Naive thymus-derived CD4-positive, alpha-beta T cell (primary cell): ENCODE measurements at regions of chr12 and their contacts with region 1.

Region 1: DNA sequence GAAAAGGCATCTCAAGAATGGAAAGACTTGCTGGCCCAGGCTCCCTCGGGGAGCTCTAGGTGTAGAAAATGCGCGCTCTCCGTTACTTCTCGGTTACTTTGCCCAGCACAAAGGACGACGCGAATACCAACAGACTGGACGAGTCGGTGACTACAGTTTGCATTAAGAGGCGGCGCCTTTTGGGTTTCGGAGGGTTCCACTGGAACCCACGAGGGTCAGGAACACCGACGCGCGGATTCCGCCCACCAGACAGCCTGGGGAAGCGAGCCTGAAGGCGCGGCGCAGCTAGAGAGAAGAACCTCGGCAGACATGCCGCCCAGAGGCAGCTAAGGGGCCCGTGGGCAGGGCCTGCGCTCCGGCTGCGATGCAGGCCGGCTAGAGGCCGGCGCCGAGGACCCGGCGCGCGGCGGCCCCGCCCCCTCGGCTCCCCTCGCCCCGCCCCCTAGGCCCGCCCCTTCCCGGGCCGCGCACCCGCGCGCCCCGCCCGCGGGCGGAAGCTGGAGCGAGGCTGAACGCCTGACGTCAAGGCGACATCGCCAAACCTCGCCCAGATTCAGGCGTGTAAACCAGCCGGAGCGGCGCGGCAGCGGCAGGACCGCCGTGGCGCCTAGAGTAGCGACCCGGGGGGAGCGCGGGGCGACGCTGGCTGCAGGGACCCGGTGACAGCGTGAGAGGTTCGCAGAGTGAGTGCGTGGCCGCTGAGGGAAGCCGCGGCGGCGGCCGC is at the start of gene RAP1B:
- DNase-seq: peak; percentile 86 to 92 (median 89)
- ATAC-seq: peak; percentile 92
- H3K4me3 ChIP-seq: peak within 1 kb of the TSS; percentile 89
- H3K4me3 Mint-ChIP-seq: peak within 1 kb of the TSS; percentile 93 to 99 (median 98)
- H3K27ac ChIP-seq: peak within 1 kb of the TSS; percentile 97
- H3K27ac Mint-ChIP-seq: peak within 1 kb of the TSS; percentile 95 to 99 (median 98)
- H3K4me1 ChIP-seq: peaks cover 15 to 18% of the 10 kb centered on the region in 2 donors
- H3K4me1 Mint-ChIP-seq: peaks cover 36 to 46% (median 41%) of the 10 kb centered on the region in 7 donors
- H3K27me3 ChIP-seq: no peaks in the 10 kb centered on the region
- H3K27me3 Mint-ChIP-seq: no peaks in the 10 kb centered on the region
- total RNA-seq, gene RAP1B: 202 to 287 (median 223) TPM

Region 2: GRCh38 chr12:68131869-68132405 is 478.6 kb before region 1 on chr12:
- CTCF ChIA-PET with region 1: no interaction called
- POLR2A ChIA-PET with region 1: no interaction called
- intact Hi-C with region 1: no loop called
- DNase-seq: no peak
- ATAC-seq: no peak
- H3K4me3 ChIP-seq: no peak overlapping the region
- H3K4me3 Mint-ChIP-seq: no peak overlapping the region
- H3K27ac ChIP-seq: no peak overlapping the region
- H3K27ac Mint-ChIP-seq: no peak overlapping the region
- H3K4me1 ChIP-seq: peaks cover 4 to 5% of the 10 kb centered on the region in 2 donors
- H3K4me1 Mint-ChIP-seq: peaks cover 7 to 27% (median 19%) of the 10 kb centered on the region in 7 donors
- H3K27me3 ChIP-seq: no peaks in the 10 kb centered on the region
- H3K27me3 Mint-ChIP-seq: peaks cover 0 to 4% (median 0%) of the 10 kb centered on the region in 5 donors

Region 3: GRCh38 chr12:68331869-68332727 is 278.4 kb before region 1 on chr12 and contains the start of gene MDM1:
- CTCF ChIA-PET with region 1: no interaction called
- POLR2A ChIA-PET with region 1: interaction called, 8 read pairs
- intact Hi-C with region 1: loop called (anchors 1 kb)
- DNase-seq: peak; percentile 85 to 96 (median 95)
- ATAC-seq: peak; percentile 98
- H3K4me3 ChIP-seq: peak within 1 kb of the TSS; percentile 68
- H3K4me3 Mint-ChIP-seq: peak within 1 kb of the TSS; percentile 85 to 93 (median 91)
- H3K27ac ChIP-seq: peak within 1 kb of the TSS; percentile 73
- H3K27ac Mint-ChIP-seq: peak within 1 kb of the TSS; percentile 78 to 93 (median 90)
- H3K4me1 ChIP-seq: peaks cover 9 to 26% of the 10 kb centered on the region in 2 donors
- H3K4me1 Mint-ChIP-seq: peaks cover 33 to 61% (median 52%) of the 10 kb centered on the region in 7 donors
- H3K27me3 ChIP-seq: no peaks in the 10 kb centered on the region
- H3K27me3 Mint-ChIP-seq: peaks cover 0 to 15% (median 0%) of the 10 kb centered on the region in 5 donors
- total RNA-seq, gene MDM1: 16.2 to 38.4 (median 23.4) TPM

Region 4: GRCh38 chr12:68462803-68463202 is 147.7 kb before region 1 on chr12:
- CTCF ChIA-PET with region 1: no interaction called
- POLR2A ChIA-PET with region 1: interaction called, 10 read pairs
- intact Hi-C with region 1: no loop called
- DNase-seq: peak in 2 of 9 donors; percentile 9 to 31
- ATAC-seq: no peak
- H3K4me3 ChIP-seq: peak overlapping the region; percentile 60
- H3K4me3 Mint-ChIP-seq: peak overlapping the region; percentile 76 to 89 (median 82)
- H3K27ac ChIP-seq: no peak overlapping the region
- H3K27ac Mint-ChIP-seq: peak overlapping the region; percentile 84 to 96 (median 88)
- H3K4me1 ChIP-seq: peaks cover 0 to 7% of the 10 kb centered on the region in 2 donors
- H3K4me1 Mint-ChIP-seq: peaks cover 8 to 30% (median 18%) of the 10 kb centered on the region in 7 donors
- H3K27me3 ChIP-seq: no peaks in the 10 kb centered on the region
- H3K27me3 Mint-ChIP-seq: no peaks in the 10 kb centered on the region

Region 5: DNA sequence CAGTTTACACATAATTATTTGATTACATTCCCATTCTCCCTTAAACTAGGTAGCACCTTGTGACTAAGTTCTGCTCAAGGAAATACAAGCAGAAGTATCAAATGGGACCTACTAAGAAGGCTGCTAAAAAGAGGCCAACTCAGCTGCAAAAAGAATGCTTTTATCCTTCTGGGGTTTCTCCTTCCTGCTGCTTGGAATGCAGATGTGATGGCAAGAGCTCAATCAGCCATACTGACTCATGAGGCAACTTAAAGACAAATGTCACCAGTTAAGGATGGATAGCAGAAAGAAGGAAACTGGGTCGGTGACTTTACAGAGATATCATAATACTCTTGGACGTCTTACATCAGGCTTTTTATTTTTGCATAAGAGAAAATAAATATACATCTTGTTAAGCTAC is 37.9 kb before region 1 on chr12:
- CTCF ChIA-PET with region 1: no interaction called
- POLR2A ChIA-PET with region 1: interaction called, 11 read pairs
- intact Hi-C with region 1: loop called in 1 of 2 experiments (anchors 5 kb)
- DNase-seq: no peak
- ATAC-seq: no peak
- H3K4me3 ChIP-seq: no peak overlapping the region
- H3K4me3 Mint-ChIP-seq: no peak overlapping the region
- H3K27ac ChIP-seq: no peak overlapping the region
- H3K27ac Mint-ChIP-seq: peak overlapping the region in 1 of 9 donors; percentile 30
- H3K4me1 ChIP-seq: peaks cover 5 to 7% of the 10 kb centered on the region in 2 donors
- H3K4me1 Mint-ChIP-seq: peaks cover 2 to 39% (median 32%) of the 10 kb centered on the region in 7 donors
- H3K27me3 ChIP-seq: no peaks in the 10 kb centered on the region
- H3K27me3 Mint-ChIP-seq: no peaks in the 10 kb centered on the region

Region 6: GRCh38 chr12:68622250-68622649 is 11.7 kb after region 1 on chr12:
- CTCF ChIA-PET with region 1: interaction called, 4 read pairs
- POLR2A ChIA-PET with region 1: interaction called, 18 read pairs
- intact Hi-C with region 1: loop called in 1 of 2 experiments (anchors 1 kb)
- DNase-seq: no peak
- ATAC-seq: peak; percentile 31
- H3K4me3 ChIP-seq: peak overlapping the region; percentile 1
- H3K4me3 Mint-ChIP-seq: peak overlapping the region; percentile 4 to 98 (median 66)
- H3K27ac ChIP-seq: peak overlapping the region; percentile 26
- H3K27ac Mint-ChIP-seq: peak overlapping the region; percentile 25 to 90 (median 60)
- H3K4me1 ChIP-seq: peaks cover 46 to 60% of the 10 kb centered on the region in 2 donors
- H3K4me1 Mint-ChIP-seq: peaks cover 67 to 99% (median 88%) of the 10 kb centered on the region in 7 donors
- H3K27me3 ChIP-seq: no peaks in the 10 kb centered on the region
- H3K27me3 Mint-ChIP-seq: no peaks in the 10 kb centered on the region

Region 7: DNA sequence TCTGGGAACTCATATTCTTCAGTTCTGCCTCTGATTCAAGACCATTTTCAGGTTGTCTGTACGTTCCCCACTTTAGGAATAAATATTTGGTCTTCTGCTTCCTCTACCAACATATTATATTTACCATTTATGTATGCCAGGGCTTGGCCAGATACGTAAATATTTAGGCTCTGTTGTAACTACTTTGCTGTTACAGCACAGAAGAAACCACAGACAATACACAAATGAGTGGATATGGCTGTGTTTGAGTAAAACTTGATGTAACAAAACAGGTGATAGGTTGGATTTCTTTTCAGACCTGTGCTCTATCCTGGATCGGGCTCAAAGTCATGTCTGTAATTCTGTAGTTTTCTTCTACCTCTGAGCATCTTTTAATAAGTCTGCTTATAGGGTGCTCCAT is 37.6 kb after region 1 on chr12:
- CTCF ChIA-PET with region 1: no interaction called
- POLR2A ChIA-PET with region 1: interaction called, 6 read pairs
- intact Hi-C with region 1: loop called in 1 of 2 experiments (anchors 5 kb)
- DNase-seq: no peak
- ATAC-seq: peak; percentile 54
- H3K4me3 ChIP-seq: no peak overlapping the region
- H3K4me3 Mint-ChIP-seq: peak overlapping the region in 6 of 10 donors; percentile 25 to 51 (median 36)
- H3K27ac ChIP-seq: peak overlapping the region; percentile 45
- H3K27ac Mint-ChIP-seq: peak overlapping the region; percentile 34 to 88 (median 67)
- H3K4me1 ChIP-seq: peaks cover 17 to 18% of the 10 kb centered on the region in 2 donors
- H3K4me1 Mint-ChIP-seq: peaks cover 33 to 77% (median 60%) of the 10 kb centered on the region in 7 donors
- H3K27me3 ChIP-seq: no peaks in the 10 kb centered on the region
- H3K27me3 Mint-ChIP-seq: no peaks in the 10 kb centered on the region

Region 8: DNA sequence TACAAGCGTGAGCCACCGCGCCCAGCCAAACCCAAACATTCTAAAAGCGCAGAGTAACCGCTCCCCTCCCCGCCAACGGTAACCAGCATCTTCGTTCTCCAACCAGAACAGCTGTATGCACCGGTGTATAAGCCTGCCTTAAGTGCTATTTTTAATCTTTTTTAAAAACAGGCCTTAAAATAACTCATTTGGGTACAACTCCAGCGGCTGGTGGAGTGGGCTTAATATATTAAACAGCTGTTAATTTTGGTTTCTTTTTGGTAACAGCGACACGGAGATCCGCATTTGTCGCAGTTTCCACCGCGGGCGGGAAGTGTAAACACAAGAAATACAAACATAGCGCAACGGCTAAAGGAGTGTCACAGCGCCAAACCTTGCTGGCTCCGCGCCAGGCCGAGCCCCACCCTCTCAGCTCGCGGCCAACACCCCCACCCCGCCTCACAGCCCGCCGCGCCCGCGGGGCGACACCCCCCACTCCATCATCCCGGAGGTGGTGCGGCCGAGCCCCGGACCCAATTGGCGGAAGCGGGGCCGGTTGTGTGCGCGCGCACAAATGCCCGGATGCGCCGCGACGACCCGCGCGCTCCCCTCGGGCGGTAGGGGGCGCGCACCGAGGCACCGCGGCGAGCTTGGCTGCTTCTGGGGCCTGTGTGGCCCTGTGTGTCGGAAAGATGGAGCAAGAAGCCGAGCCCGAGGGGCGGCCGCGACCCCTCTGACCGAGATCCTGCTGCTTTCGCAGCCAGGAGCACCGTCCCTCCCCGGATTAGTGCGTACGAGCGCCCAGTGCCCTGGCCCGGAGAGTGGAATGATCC is 197.2 kb after region 1 on chr12 and contains the start of gene MDM2:
- CTCF ChIA-PET with region 1: no interaction called
- POLR2A ChIA-PET with region 1: interaction called, 7 read pairs
- intact Hi-C with region 1: loop called (anchors 1 kb)
- DNase-seq: peak; percentile 94 to 98 (median 96)
- ATAC-seq: peak; percentile 97
- H3K4me3 ChIP-seq: peak within 1 kb of the TSS; percentile 79
- H3K4me3 Mint-ChIP-seq: peak within 1 kb of the TSS; percentile 87 to 100 (median 96)
- H3K27ac ChIP-seq: peak within 1 kb of the TSS; percentile 96
- H3K27ac Mint-ChIP-seq: peak within 1 kb of the TSS; percentile 96 to 100 (median 97)
- H3K4me1 ChIP-seq: peaks cover 3 to 13% of the 10 kb centered on the region in 2 donors
- H3K4me1 Mint-ChIP-seq: peaks cover 6 to 47% (median 29%) of the 10 kb centered on the region in 7 donors
- H3K27me3 ChIP-seq: no peaks in the 10 kb centered on the region
- H3K27me3 Mint-ChIP-seq: no peaks in the 10 kb centered on the region
- total RNA-seq, gene MDM2: 77.8 to 271 (median 80.8) TPM